Gastrocnemius medialis (tissue), 4 donors: ENCODE measurements at regions of chr13 and their contacts with region 1.

Region 1: DNA sequence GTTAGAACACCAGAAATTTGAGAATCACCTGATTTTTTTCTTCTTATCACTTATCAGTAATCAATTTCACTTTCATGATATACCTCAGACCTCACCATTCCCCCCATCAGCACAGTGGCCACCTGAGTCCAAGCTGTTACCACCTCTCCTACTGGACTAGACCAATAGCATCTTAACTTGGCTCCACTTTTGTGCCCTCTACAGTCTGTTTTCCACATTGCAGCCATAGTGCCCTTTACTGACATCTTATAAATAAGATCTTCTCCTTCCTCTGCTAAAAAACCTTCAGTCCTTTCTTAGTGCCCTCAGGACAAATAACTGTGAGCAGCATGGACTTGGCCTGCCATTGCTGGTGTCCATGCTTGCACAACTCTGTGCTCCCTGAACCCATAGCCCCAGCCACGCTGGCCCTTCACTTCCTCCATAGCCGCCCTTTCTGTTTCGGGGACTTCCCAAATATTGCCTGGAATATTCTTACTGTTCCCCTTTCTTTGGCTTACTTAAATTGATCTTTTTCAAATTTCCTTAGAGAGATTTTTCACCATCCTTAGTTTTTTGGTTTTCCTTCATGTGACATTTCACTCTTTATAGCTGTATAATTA is 380.8 kb downstream of the LMO7 start:
- DNase-seq: no peak
- ATAC-seq: no peak
- H3K4me3 ChIP-seq: no peak overlapping the region
- H3K27ac ChIP-seq: no peak overlapping the region
- H3K4me1 ChIP-seq: peaks cover 0 to 9% of the 10 kb centered on the region in 2 donors
- H3K27me3 ChIP-seq: no peaks in the 10 kb centered on the region
- CTCF ChIP-seq: no peak
- POLR2A ChIP-seq: no peak

Region 2: GRCh38 chr13:75876360-75877050 is 140.4 kb before region 1 on chr13:
- in situ Hi-C with region 1: no loop called
- intact Hi-C with region 1: loop called (anchors 10 kb)
- DNase-seq: peak; percentile 11 to 36
- ATAC-seq: peak; percentile 78 to 85
- H3K4me3 ChIP-seq: no peak overlapping the region
- H3K27ac ChIP-seq: no peak overlapping the region
- H3K4me1 ChIP-seq: no peaks in the 10 kb centered on the region
- H3K27me3 ChIP-seq: no peaks in the 10 kb centered on the region
- CTCF ChIP-seq: peak; percentile 78 to 88 (median 80)
- POLR2A ChIP-seq: no peak

Region 3: GRCh38 chr13:76038920-76039716 is 22.2 kb after region 1 on chr13:
- in situ Hi-C with region 1: no loop called
- intact Hi-C with region 1: no loop called
- DNase-seq: no peak
- ATAC-seq: no peak
- H3K4me3 ChIP-seq: no peak overlapping the region
- H3K27ac ChIP-seq: no peak overlapping the region
- H3K4me1 ChIP-seq: no peaks in the 10 kb centered on the region
- H3K27me3 ChIP-seq: no peaks in the 10 kb centered on the region
- CTCF ChIP-seq: no peak
- POLR2A ChIP-seq: no peak

Region 4: GRCh38 chr13:76213423-76213904 is 196.6 kb after region 1 on chr13:
- in situ Hi-C with region 1: no loop called
- intact Hi-C with region 1: no loop called
- DNase-seq: no peak
- ATAC-seq: no peak
- H3K4me3 ChIP-seq: no peak overlapping the region
- H3K27ac ChIP-seq: no peak overlapping the region
- H3K4me1 ChIP-seq: no peaks in the 10 kb centered on the region
- H3K27me3 ChIP-seq: no peaks in the 10 kb centered on the region
- CTCF ChIP-seq: no peak
- POLR2A ChIP-seq: no peak